Activated CD4-positive, alpha-beta memory T cell treated with anti-CD3 and anti-CD28 coated beads, Interleukin-2, amount 10 ng/mL, durations not matched to agents 7 days and 5 days (primary cell): ENCODE measurements at regions of chr19 and their contacts with region 1.

Region 1: DNA sequence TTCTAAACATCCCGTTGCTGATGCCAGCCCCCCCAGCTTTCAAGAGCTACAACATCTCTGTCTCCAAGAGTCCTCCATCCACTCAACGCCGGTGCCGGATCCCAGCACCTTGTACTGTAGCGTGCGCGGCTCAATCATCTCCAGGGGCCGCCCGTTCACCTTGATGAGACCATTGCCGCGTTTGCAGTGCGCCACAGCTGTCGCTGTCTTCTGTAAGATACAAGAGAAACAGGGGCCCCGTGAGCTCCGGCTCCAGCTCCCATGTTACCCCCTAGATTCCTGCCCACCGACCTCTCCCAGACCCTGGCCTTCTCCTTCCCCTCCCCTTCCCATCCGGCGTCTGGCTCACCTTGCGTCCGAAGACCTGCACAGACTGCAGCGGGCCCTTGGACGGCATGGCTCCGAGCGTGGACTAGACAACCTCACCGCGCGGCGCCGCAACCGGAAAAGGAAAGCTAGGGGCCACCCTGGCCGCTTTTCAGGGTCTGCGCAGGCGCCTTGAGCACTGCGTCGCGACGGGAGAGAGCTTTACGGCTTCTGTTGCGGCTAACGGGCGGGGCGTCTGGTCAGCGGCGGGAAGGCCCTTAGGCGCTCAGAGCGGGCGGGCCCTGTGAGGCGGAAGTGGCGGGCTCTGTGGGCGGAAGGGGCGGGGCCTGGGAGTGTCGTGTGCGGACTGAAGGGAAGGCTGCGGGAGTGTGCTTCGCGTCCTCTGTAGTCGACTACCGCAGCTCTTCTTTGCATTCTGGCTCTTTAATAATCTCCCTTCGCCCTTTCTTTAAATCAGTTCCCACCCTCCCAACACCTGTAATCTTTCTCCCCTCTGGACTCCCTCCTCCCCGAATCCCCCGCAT is at the start of gene RPS16:
- DNase-seq: peak; percentile 99
- H3K4me3 Mint-ChIP-seq: peak within 1 kb of the TSS; percentile 99
- H3K27ac Mint-ChIP-seq: peak within 1 kb of the TSS; percentile 98
- H3K4me1 Mint-ChIP-seq: peaks cover 64% of the 10 kb centered on the region
- H3K27me3 Mint-ChIP-seq: no peaks in the 10 kb centered on the region
- total RNA-seq, gene RPS16: 2,238 to 2,243 TPM

Region 2: DNA sequence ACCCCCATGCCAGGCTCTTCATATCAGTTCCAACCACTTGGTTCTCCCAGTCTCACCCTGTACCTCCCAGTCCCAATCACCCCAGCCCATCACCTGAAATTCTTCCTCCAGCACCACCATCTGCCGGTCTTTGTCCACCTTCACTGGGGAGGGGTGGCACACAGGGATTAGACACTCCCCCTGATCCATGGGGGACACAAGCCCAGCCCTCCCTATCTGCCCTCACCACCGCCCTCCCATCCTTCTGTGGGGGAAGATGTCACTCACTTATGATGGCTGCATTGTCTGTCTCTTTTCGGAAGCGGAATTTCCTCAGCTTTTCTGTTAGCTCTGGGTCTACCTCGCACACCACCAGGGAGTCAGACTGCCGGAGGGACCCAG is 100.6 kb before region 1 on chr19:
- CTCF ChIA-PET with region 1: interaction called, 5 read pairs
- POLR2A ChIA-PET with region 1: interaction called, 16 read pairs
- DNase-seq: peak; percentile 44
- H3K4me3 Mint-ChIP-seq: peak overlapping the region; percentile 98
- H3K27ac Mint-ChIP-seq: peak overlapping the region; percentile 97
- H3K4me1 Mint-ChIP-seq: peaks cover 62% of the 10 kb centered on the region
- H3K27me3 Mint-ChIP-seq: no peaks in the 10 kb centered on the region

Region 3: DNA sequence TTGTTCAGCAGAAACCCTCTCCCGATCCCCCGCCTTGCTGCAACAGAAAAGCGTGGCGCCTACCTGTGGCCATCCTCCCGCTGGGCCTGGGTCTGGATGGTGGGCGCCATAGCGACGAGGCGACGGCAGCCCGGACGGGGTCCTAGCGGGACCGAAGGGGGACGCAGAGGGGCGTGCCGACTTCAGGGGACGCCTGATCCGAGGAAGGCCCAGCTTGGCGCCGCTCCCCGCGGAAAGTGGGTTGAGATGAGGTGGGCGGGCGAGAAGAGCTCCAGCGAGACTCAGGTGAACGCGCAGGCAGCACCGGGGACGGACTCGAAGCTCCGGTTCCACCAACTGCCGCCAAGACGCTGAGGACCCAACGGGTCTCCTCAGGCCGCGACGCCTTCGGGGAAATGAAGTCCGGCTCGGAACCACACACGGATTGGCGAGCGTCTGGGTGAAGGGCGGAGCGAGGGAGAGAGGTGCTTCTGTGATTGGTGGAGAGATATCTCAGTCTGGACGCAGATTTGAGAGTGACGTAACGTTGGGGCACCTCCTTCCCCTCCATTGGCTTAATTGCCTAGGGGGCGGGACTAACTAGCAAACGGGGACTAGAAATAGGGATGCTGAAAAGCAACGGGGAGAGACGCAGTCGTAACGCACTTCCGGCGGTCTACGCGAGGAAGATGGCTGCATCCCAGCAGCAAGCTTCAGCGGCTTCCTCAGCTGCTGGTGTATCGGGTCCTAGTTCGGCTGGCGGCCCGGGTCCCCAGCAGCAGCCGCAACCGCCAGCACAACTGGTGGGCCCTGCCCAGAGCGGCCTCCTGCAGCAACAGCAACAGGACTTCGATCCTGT is 44.8 kb before region 1 on chr19 and contains the starts of genes MED29 and PAF1:
- CTCF ChIA-PET with region 1: interaction called, 12 read pairs
- POLR2A ChIA-PET with region 1: interaction called, 55 read pairs
- DNase-seq: peak; percentile 97
- H3K4me3 Mint-ChIP-seq: peak within 1 kb of the TSS; percentile 90
- H3K27ac Mint-ChIP-seq: peak within 1 kb of the TSS; percentile 97
- H3K4me1 Mint-ChIP-seq: peaks cover 52% of the 10 kb centered on the region
- H3K27me3 Mint-ChIP-seq: no peaks in the 10 kb centered on the region
- total RNA-seq, gene MED29: 32.3 to 34.5 TPM
- total RNA-seq, gene PAF1: 44.0 to 47.2 TPM

Region 4: DNA sequence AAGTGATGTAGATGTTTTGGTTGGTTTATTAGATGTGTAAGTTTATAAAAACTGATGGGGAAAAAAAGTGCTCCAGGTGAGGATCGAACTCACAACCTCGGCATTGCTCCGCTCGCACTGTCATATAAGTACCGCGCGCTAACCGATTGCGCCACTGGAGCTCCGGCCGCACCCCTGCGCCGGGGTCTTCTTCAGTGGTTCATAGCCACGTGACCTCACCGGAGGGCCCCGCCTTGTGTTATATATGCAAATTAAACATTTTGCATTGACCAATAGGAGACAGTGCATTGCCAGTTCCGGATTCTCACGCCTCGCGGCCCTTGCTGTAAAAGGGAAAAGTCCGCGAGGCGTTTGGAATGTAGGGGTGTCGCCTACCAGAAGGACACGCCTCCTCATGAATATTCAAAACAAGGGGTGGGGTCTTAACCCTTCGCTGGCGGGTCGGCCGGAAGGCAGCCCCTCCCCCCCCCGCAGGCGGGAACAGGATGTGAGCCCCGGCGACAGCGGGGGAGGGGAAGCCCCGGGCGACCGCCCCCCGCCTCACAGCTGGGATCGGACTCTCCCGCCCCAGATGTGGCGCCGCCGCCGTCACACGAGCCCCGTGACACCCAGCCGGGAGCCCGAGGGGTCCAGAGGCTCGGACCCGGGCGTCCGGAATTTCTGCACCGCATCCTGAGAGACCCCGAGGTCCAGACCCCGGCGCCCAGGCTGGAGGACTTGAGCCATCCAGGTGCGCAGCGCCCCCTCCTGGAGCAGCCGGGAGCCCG is 23.4 kb before region 1 on chr19 and contains the start of gene PLEKHG2:
- CTCF ChIA-PET with region 1: interaction called, 14 read pairs
- POLR2A ChIA-PET with region 1: interaction called, 157 read pairs
- DNase-seq: peak; percentile 98
- H3K4me3 Mint-ChIP-seq: peak within 1 kb of the TSS; percentile 89
- H3K27ac Mint-ChIP-seq: peak within 1 kb of the TSS; percentile 96
- H3K4me1 Mint-ChIP-seq: peaks cover 39% of the 10 kb centered on the region
- H3K27me3 Mint-ChIP-seq: peaks cover 2% of the 10 kb centered on the region
- total RNA-seq, gene PLEKHG2: 82.4 to 93.0 TPM

Region 5: GRCh38 chr19:39480337-39481228 is 44.9 kb after region 1 on chr19 and contains the start of gene TIMM50:
- CTCF ChIA-PET with region 1: interaction called, 16 read pairs
- POLR2A ChIA-PET with region 1: interaction called, 15 read pairs
- DNase-seq: peak; percentile 98
- H3K4me3 Mint-ChIP-seq: peak within 1 kb of the TSS; percentile 84
- H3K27ac Mint-ChIP-seq: peak within 1 kb of the TSS; percentile 81
- H3K4me1 Mint-ChIP-seq: peaks cover 26% of the 10 kb centered on the region
- H3K27me3 Mint-ChIP-seq: no peaks in the 10 kb centered on the region
- total RNA-seq, gene TIMM50: 44.0 to 44.8 TPM

Region 6: GRCh38 chr19:39532233-39533002 is 96.7 kb after region 1 on chr19 and contains the start of gene EID2B:
- CTCF ChIA-PET with region 1: interaction called, 61 read pairs
- POLR2A ChIA-PET with region 1: interaction called, 17 read pairs
- DNase-seq: peak; percentile 96
- H3K4me3 Mint-ChIP-seq: peak within 1 kb of the TSS; percentile 92
- H3K27ac Mint-ChIP-seq: peak within 1 kb of the TSS; percentile 75
- H3K4me1 Mint-ChIP-seq: peaks cover 33% of the 10 kb centered on the region
- H3K27me3 Mint-ChIP-seq: no peaks in the 10 kb centered on the region
- total RNA-seq, gene EID2B: 4.5 to 4.7 TPM